Posterior cingulate gyrus (tissue), 11 donors: ENCODE measurements at regions of chr17 and their contacts with region 1.

Region 1: GRCh38 chr17:17823433-17824118 is 13.2 kb downstream of the SREBF1 start:
- DNase-seq: peak; percentile 76 to 99 (median 83)

Region 2: GRCh38 chr17:17784657-17785267 is 38.8 kb before region 1 on chr17:
- intact Hi-C with region 1: loop called (anchors 5 kb)
- DNase-seq: peak in 4 of 10 donors; percentile 45 to 89 (median 48)

Region 3: GRCh38 chr17:17836250-17836817 is 12.8 kb after region 1 on chr17:
- intact Hi-C with region 1: loop called (anchors 2 kb)
- DNase-seq: peak; percentile 97 to 100 (median 99)